CD8-positive, alpha-beta T cell (primary cell): ENCODE measurements at regions of chr21 and their contacts with region 1.

Region 1: GRCh38 chr21:15514073-15514946 is 215.5 kb upstream of the USP25 start:
- DNase-seq: peak; percentile 11 to 84 (median 65)
- ATAC-seq: peak; percentile 99
- H3K4me3 ChIP-seq: peak overlapping the region in 1 of 2 experiments; percentile 0
- H3K4me3 Mint-ChIP-seq: peak overlapping the region; percentile 39
- H3K27ac ChIP-seq: peak overlapping the region; percentile 33 to 78
- H3K27ac Mint-ChIP-seq: peak overlapping the region; percentile 85
- H3K4me1 ChIP-seq: peaks cover 25% of the 10 kb centered on the region
- H3K4me1 Mint-ChIP-seq: peaks cover 25% of the 10 kb centered on the region
- H3K27me3 ChIP-seq: no peaks in the 10 kb centered on the region
- H3K27me3 Mint-ChIP-seq: no peaks in the 10 kb centered on the region
- CTCF ChIP-seq: no peak

Region 2: DNA sequence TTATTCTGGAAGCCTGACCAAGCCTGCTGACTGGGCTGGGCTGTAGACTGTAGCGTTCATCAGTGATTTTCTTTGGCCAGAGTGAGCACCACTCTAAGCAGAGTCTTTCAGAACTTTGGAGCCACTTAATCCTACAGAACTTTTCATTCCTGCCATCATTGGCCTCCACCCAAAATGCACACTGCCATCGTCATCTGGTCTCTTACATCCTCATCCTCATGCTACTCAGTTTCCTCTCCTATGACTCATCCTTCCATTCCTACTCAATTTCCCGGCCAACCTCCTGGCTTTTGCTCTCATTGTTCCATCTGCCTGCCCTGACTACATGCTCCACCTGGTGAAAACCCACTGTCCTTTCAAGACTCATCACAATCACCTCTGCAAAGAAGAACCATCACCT is 18.3 kb before region 1 on chr21:
- CTCF ChIA-PET with region 1: no interaction called
- POLR2A ChIA-PET with region 1: interaction called, 3 read pairs
- intact Hi-C with region 1: loop called in 1 of 2 experiments (anchors 2 kb)
- DNase-seq: no peak
- ATAC-seq: no peak
- H3K4me3 ChIP-seq: no peak overlapping the region
- H3K4me3 Mint-ChIP-seq: no peak overlapping the region
- H3K27ac ChIP-seq: no peak overlapping the region
- H3K27ac Mint-ChIP-seq: no peak overlapping the region
- H3K4me1 ChIP-seq: no peaks in the 10 kb centered on the region
- H3K4me1 Mint-ChIP-seq: no peaks in the 10 kb centered on the region
- H3K27me3 ChIP-seq: no peaks in the 10 kb centered on the region
- H3K27me3 Mint-ChIP-seq: no peaks in the 10 kb centered on the region
- CTCF ChIP-seq: no peak

Region 3: DNA sequence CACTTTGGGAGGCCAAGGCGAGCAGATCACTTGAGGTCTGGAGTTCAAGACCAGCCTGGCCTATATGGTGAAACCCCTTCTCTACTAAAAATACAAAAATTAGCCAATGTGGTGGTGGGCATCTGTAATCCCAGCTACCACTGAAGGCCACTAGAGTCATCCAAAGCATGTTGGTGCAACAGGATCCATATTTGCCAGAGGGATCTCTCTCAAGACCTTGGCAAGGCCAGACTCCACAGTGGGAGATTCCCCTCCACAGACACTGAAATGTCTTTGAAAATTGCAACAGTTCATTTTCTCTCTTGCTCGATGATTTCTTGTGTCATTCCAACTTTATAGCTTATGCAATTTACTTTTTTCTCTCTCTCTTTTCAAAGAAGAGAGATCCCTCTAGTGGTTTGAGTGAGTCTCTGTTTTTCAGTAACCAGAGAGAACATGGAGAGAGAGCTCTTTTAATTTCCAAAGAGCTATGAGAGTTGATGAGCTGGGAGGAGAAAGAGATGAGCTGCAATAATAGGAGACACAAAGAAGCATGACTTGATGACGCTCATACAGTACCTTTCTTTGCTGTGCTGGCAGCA is 38.7 kb after region 1 on chr21:
- CTCF ChIA-PET with region 1: interaction called, 23 read pairs
- POLR2A ChIA-PET with region 1: no interaction called
- intact Hi-C with region 1: loop called in 1 of 2 experiments (anchors 5 kb)
- DNase-seq: peak in 2 of 9 experiments; percentile 19 to 33
- ATAC-seq: no peak
- H3K4me3 ChIP-seq: no peak overlapping the region
- H3K4me3 Mint-ChIP-seq: no peak overlapping the region
- H3K27ac ChIP-seq: no peak overlapping the region
- H3K27ac Mint-ChIP-seq: no peak overlapping the region
- H3K4me1 ChIP-seq: peaks cover 8% of the 10 kb centered on the region
- H3K4me1 Mint-ChIP-seq: peaks cover 14% of the 10 kb centered on the region
- H3K27me3 ChIP-seq: no peaks in the 10 kb centered on the region
- H3K27me3 Mint-ChIP-seq: no peaks in the 10 kb centered on the region
- CTCF ChIP-seq: peak; percentile 71

Region 4: GRCh38 chr21:15735409-15735808 is 221.1 kb after region 1 on chr21:
- CTCF ChIA-PET with region 1: no interaction called
- POLR2A ChIA-PET with region 1: no interaction called
- intact Hi-C with region 1: loop called in 1 of 2 experiments (anchors 2 kb)
- DNase-seq: peak in 1 of 9 experiments; percentile 17
- ATAC-seq: no peak
- H3K4me3 ChIP-seq: no peak overlapping the region
- H3K4me3 Mint-ChIP-seq: peak overlapping the region; percentile 40
- H3K27ac ChIP-seq: peak overlapping the region in 1 of 2 experiments; percentile 41
- H3K27ac Mint-ChIP-seq: peak overlapping the region; percentile 49
- H3K4me1 ChIP-seq: peaks cover 72% of the 10 kb centered on the region
- H3K4me1 Mint-ChIP-seq: peaks cover 90% of the 10 kb centered on the region
- H3K27me3 ChIP-seq: no peaks in the 10 kb centered on the region
- H3K27me3 Mint-ChIP-seq: no peaks in the 10 kb centered on the region
- CTCF ChIP-seq: no peak

Region 5: GRCh38 chr21:15826147-15826780 is 312.0 kb after region 1 on chr21:
- CTCF ChIA-PET with region 1: interaction called, 3 read pairs
- POLR2A ChIA-PET with region 1: no interaction called
- intact Hi-C with region 1: loop called (anchors 10 kb)
- DNase-seq: peak in 4 of 9 experiments; percentile 23 to 75 (median 48)
- ATAC-seq: peak; percentile 75
- H3K4me3 ChIP-seq: no peak overlapping the region
- H3K4me3 Mint-ChIP-seq: no peak overlapping the region
- H3K27ac ChIP-seq: no peak overlapping the region
- H3K27ac Mint-ChIP-seq: peak overlapping the region; percentile 3
- H3K4me1 ChIP-seq: peaks cover 26% of the 10 kb centered on the region
- H3K4me1 Mint-ChIP-seq: peaks cover 52% of the 10 kb centered on the region
- H3K27me3 ChIP-seq: no peaks in the 10 kb centered on the region
- H3K27me3 Mint-ChIP-seq: no peaks in the 10 kb centered on the region
- CTCF ChIP-seq: peak; percentile 72

Region 6: GRCh38 chr21:15841856-15842564 is 327.7 kb after region 1 on chr21:
- CTCF ChIA-PET with region 1: no interaction called
- POLR2A ChIA-PET with region 1: no interaction called
- intact Hi-C with region 1: loop called in 1 of 2 experiments (anchors 10 kb)
- DNase-seq: no peak
- ATAC-seq: no peak
- H3K4me3 ChIP-seq: no peak overlapping the region
- H3K4me3 Mint-ChIP-seq: no peak overlapping the region
- H3K27ac ChIP-seq: no peak overlapping the region
- H3K27ac Mint-ChIP-seq: no peak overlapping the region
- H3K4me1 ChIP-seq: no peaks in the 10 kb centered on the region
- H3K4me1 Mint-ChIP-seq: no peaks in the 10 kb centered on the region
- H3K27me3 ChIP-seq: no peaks in the 10 kb centered on the region
- H3K27me3 Mint-ChIP-seq: no peaks in the 10 kb centered on the region
- CTCF ChIP-seq: no peak